ENCODE measurements at regions of chr7 and their contacts with region 1.

Region 1: DNA sequence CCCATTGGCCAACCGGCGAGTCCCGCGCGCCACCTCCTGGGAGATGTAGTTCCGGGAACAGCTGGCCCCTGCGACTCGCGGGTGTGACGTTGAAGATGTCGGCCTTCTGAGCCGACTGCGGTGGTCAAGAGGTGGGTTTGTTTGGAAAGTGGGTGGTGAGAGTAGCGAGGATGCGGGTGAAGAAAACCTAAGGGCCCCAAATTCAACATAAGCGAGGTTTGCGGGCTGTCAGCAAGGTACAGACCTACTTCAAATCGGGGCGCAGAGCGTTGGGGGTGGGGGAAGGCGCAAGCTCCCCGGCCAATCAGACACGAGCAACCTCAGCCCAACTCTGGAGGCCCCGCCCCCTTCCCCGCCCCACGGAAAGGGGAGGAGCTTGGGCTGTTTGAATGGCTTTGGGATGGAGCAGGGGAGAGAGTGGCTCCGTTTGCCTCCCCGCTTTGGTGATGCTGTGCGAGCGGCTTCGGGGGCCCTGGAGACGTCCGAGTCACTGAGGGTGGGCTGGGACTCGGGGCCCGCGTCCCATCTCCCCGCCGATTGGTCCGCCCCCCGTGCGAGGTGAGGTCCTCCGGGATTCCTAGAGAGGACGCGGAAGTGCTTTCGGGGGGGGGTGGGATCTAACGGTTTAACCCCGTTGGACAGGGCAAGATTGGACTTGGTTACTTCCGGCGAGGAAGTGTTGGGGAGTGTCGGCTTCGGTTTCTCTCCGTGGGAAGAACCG is at the start of gene ZKSCAN5:
- DNase-seq: peak; percentile 93 to 95 (median 95)
- H3K4me3 ChIP-seq: peak within 1 kb of the TSS; percentile 83 to 96 (median 91)
- H3K4me3 Mint-ChIP-seq: peak within 1 kb of the TSS; percentile 94 to 99
- H3K27ac ChIP-seq: peak within 1 kb of the TSS; percentile 79 to 91
- H3K27ac Mint-ChIP-seq: peak within 1 kb of the TSS; percentile 91 to 99 (median 98)
- H3K4me1 ChIP-seq: peaks cover 30% of the 10 kb centered on the region in 2 donors
- H3K4me1 Mint-ChIP-seq: peaks cover 21% of the 10 kb centered on the region
- H3K27me3 ChIP-seq: no peaks in the 10 kb centered on the region
- H3K27me3 Mint-ChIP-seq: peaks cover 0 to 2% (median 0%) of the 10 kb centered on the region in 3 donors
- CTCF ChIP-seq: no peak
- polyA plus RNA-seq, gene ZKSCAN5: 1.6 to 2.9 (median 2.2) TPM

Region 2: DNA sequence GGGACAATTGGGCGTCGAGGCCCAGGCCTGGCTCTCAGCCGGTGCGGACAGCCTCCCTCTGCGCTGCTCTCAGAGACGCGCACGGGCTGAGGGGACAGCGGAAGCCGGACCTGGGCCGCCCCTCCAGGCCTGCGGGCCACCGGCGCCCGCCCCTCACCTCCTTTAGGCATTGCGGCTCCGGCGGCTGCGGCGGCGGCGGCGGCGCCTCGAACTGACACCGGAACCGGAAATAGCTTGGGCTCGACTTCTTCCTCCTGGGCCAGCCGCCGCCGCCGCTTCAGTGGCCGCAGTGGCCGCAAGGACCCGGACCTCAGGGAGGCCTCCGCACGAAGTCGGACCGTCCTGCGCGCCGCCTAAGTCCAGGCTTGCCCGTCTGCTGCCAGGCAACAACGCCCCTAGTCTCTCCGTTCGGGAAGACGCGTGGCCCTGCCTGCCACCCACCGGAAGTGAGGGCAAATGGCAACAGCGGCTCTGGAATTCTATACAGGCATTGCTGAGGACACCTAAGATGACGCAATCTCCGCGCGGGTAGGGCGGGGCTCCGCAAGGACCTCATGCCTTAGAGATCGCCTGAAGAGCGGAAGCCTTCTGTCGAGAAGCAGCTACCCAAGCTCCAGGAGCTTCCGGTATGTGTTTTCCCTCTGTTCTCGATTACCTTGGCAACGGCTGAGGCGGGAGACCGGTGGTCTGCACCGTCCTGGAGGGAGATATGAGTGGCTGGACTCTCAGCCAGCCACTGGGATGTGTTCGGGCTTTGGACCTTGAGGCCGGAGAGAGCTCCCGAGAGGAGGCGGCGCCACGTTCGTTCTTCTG is 96.2 kb before region 1 on chr7 and contains the starts of genes BUD31 and PDAP1:
- intact Hi-C with region 1: loop called in 1 of 2 experiments (anchors 10 kb)
- DNase-seq: peak; percentile 93 to 96 (median 94)
- H3K4me3 ChIP-seq: peak within 1 kb of the TSS; percentile 65 to 96 (median 93)
- H3K4me3 Mint-ChIP-seq: peak within 1 kb of the TSS; percentile 97 to 99
- H3K27ac ChIP-seq: peak within 1 kb of the TSS; percentile 95 to 97
- H3K27ac Mint-ChIP-seq: peak within 1 kb of the TSS; percentile 97 to 99 (median 99)
- H3K4me1 ChIP-seq: peaks cover 25 to 35% of the 10 kb centered on the region in 2 donors
- H3K4me1 Mint-ChIP-seq: peaks cover 29% of the 10 kb centered on the region
- H3K27me3 ChIP-seq: no peaks in the 10 kb centered on the region
- H3K27me3 Mint-ChIP-seq: peaks cover 0 to 2% (median 2%) of the 10 kb centered on the region in 3 donors
- CTCF ChIP-seq: no peak
- polyA plus RNA-seq, gene BUD31: 34.3 to 256 (median 241) TPM
- polyA plus RNA-seq, gene PDAP1: 9.8 to 43.3 (median 16.2) TPM

Region 3: GRCh38 chr7:99472561-99473243 is 32.1 kb before region 1 on chr7 and contains the start of gene ZNF789:
- intact Hi-C with region 1: loop called (anchors 2 kb)
- DNase-seq: peak; percentile 90 to 93 (median 92)
- H3K4me3 ChIP-seq: peak within 1 kb of the TSS; percentile 61 to 87 (median 76)
- H3K4me3 Mint-ChIP-seq: peak within 1 kb of the TSS; percentile 88 to 97
- H3K27ac ChIP-seq: peak within 1 kb of the TSS; percentile 74 to 80
- H3K27ac Mint-ChIP-seq: peak within 1 kb of the TSS; percentile 91 to 95 (median 93)
- H3K4me1 ChIP-seq: peaks cover 7 to 17% of the 10 kb centered on the region in 2 donors
- H3K4me1 Mint-ChIP-seq: peaks cover 14% of the 10 kb centered on the region
- H3K27me3 ChIP-seq: no peaks in the 10 kb centered on the region
- H3K27me3 Mint-ChIP-seq: peaks cover 15 to 24% (median 15%) of the 10 kb centered on the region in 3 donors
- CTCF ChIP-seq: no peak
- polyA plus RNA-seq, gene ZNF789: 1.8 to 10.4 (median 2.5) TPM

Region 4: GRCh38 chr7:99558306-99559174 is 53.8 kb after region 1 on chr7 and contains the start of gene ZNF655:
- intact Hi-C with region 1: loop called (anchors 2 kb)
- DNase-seq: peak; percentile 74 to 88 (median 84)
- H3K4me3 ChIP-seq: peak within 1 kb of the TSS; percentile 71 to 97 (median 80)
- H3K4me3 Mint-ChIP-seq: peak within 1 kb of the TSS; percentile 94 to 99
- H3K27ac ChIP-seq: peak within 1 kb of the TSS; percentile 94 to 99
- H3K27ac Mint-ChIP-seq: peak within 1 kb of the TSS; percentile 97 to 100 (median 99)
- H3K4me1 ChIP-seq: peaks cover 23 to 57% of the 10 kb centered on the region in 2 donors
- H3K4me1 Mint-ChIP-seq: peaks cover 51% of the 10 kb centered on the region
- H3K27me3 ChIP-seq: no peaks in the 10 kb centered on the region
- H3K27me3 Mint-ChIP-seq: peaks cover 0 to 2% (median 0%) of the 10 kb centered on the region in 3 donors
- CTCF ChIP-seq: no peak
- polyA plus RNA-seq, gene ZNF655: 61.6 to 151 (median 62.2) TPM

Region 5: DNA sequence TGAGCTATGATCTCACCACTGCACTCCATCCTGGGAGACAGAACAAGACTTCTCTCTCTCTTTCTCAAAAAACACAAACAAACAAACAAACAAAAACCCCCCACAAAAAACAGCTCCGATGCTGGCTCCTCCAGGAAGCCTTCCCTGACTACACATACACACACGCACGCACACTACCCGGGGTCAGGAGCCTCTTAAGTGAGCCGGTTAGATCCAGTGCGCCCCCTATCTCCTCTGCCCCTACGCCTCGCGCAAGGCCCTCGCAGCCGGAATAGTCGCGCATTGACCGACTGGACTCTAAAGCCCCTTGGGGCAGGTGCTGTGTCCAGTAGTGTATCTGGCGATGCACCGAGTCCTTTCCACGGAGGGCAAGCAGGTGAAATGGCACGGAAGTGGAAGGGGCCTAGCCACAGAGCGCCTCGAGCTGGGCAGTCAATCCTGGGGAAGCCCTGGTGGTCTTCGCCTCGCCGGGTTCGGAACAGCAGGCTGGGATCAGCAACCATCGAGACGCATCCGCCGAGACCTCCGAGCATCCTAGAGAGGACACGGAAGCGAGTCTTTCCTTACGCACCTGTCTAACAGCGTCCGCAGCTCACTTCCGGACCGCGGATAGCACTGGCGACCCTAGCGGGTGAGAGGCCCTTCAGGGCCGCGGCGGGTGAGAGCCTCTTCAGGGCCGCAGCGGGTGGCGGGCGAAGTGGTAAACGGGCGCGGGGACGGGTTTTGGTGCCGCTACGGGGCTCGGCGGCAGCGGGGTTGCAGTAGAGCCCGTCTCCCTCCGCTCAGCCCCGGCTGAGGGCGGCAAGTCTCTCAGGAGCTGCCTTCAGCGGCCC is 111.8 kb after region 1 on chr7 and contains the start of gene ZSCAN25:
- intact Hi-C with region 1: loop called in 1 of 2 experiments (anchors 5 kb)
- DNase-seq: peak; percentile 75 to 77 (median 76)
- H3K4me3 ChIP-seq: peak within 1 kb of the TSS; percentile 62 to 99 (median 65)
- H3K4me3 Mint-ChIP-seq: peak within 1 kb of the TSS; percentile 97
- H3K27ac ChIP-seq: peak within 1 kb of the TSS; percentile 50 to 90
- H3K27ac Mint-ChIP-seq: peak within 1 kb of the TSS; percentile 79 to 93 (median 88)
- H3K4me1 ChIP-seq: peaks cover 13 to 20% of the 10 kb centered on the region in 2 donors
- H3K4me1 Mint-ChIP-seq: peaks cover 24% of the 10 kb centered on the region
- H3K27me3 ChIP-seq: peaks cover 2 to 13% of the 10 kb centered on the region in 2 donors
- H3K27me3 Mint-ChIP-seq: peaks cover 6 to 15% (median 9%) of the 10 kb centered on the region in 3 donors
- CTCF ChIP-seq: no peak
- polyA plus RNA-seq, gene ZSCAN25: 4.3 to 7.3 (median 6.1) TPM

Region 6: DNA sequence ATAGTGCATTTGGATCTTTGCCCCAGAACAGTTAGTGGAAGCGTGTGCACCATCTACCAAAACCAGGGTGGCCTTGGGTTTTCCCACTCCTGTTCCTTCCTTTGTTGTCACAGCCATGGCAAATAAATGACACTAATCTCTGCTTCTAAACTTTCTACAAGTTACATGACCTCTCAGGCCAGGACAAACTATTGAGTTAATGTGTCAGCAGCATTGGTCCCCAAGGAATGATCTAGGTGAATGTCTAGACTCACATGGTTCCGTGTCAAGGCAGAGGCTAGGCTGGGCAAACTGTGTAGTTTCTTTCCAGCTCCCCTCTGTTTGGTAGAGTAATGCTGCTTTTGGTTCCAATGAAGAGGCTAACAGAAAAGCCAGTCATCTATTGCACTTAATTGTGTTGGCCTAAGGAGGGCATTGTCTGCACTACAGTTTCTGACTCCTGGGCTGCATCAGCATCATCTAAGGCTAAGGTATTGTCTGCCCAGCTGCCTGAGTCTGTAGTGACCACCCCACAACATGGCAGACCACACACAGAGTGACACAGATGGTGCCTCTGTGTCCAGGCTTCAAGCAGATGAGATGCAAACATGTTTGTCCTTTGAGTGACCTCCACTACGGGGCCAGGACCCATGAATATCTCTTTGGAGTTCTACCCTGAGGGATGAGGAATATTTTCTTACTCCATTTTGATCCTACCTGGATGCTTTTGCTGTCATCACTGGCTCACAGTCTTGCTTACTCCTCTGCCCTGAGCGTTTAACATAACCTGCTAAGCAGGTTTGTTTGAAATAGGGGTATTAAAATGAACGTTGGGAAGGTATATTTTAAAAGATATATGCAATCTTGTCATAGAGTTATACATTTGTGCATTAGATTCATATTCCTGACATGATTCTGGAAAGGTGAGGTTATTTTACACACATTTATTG is 277.5 kb after region 1 on chr7:
- intact Hi-C with region 1: no loop called
- DNase-seq: no peak
- H3K4me3 ChIP-seq: no peak overlapping the region
- H3K4me3 Mint-ChIP-seq: no peak overlapping the region
- H3K27ac ChIP-seq: no peak overlapping the region
- H3K27ac Mint-ChIP-seq: no peak overlapping the region
- H3K4me1 ChIP-seq: no peaks in the 10 kb centered on the region
- H3K4me1 Mint-ChIP-seq: no peaks in the 10 kb centered on the region
- H3K27me3 ChIP-seq: peaks cover 0 to 3% of the 10 kb centered on the region in 2 donors
- H3K27me3 Mint-ChIP-seq: peaks cover 6 to 24% (median 8%) of the 10 kb centered on the region in 3 donors
- CTCF ChIP-seq: no peak